Psoas muscle (tissue), 8 donors: ENCODE measurements at regions of chr14 and their contacts with region 1.

Region 1: GRCh38 chr14:100900837-100901390 is 2.6 kb downstream of the RTL1 start:
- DNase-seq: peak in 1 of 2 donors; percentile 52
- ATAC-seq: peak; percentile 36 to 76 (median 70)
- H3K4me3 ChIP-seq: no peak overlapping the region
- H3K27ac ChIP-seq: no peak overlapping the region
- H3K4me1 ChIP-seq: peaks cover 5% of the 10 kb centered on the region
- H3K27me3 ChIP-seq: peaks cover 0 to 59% (median 13%) of the 10 kb centered on the region in 3 donors
- CTCF ChIP-seq: peak; percentile 51

Region 2: GRCh38 chr14:99619835-99620834 is 1280.8 kb before region 1 on chr14:
- intact Hi-C with region 1: no loop called
- DNase-seq: no peak
- ATAC-seq: peak in 3 of 4 donors; percentile 34 to 49 (median 46)
- H3K4me3 ChIP-seq: no peak overlapping the region
- H3K27ac ChIP-seq: peak overlapping the region; percentile 23
- H3K4me1 ChIP-seq: no peaks in the 10 kb centered on the region
- H3K27me3 ChIP-seq: peaks cover 0 to 10% (median 3%) of the 10 kb centered on the region in 3 donors
- CTCF ChIP-seq: no peak

Region 3: GRCh38 chr14:100440187-100440631 is 460.7 kb before region 1 on chr14:
- intact Hi-C with region 1: loop called in 1 of 2 experiments (anchors 10 kb)
- DNase-seq: peak; percentile 76 to 86
- ATAC-seq: peak; percentile 93 to 98 (median 96)
- H3K4me3 ChIP-seq: no peak overlapping the region
- H3K27ac ChIP-seq: peak overlapping the region; percentile 21
- H3K4me1 ChIP-seq: peaks cover 16% of the 10 kb centered on the region
- H3K27me3 ChIP-seq: no peaks in the 10 kb centered on the region
- CTCF ChIP-seq: peak; percentile 79

Region 4: DNA sequence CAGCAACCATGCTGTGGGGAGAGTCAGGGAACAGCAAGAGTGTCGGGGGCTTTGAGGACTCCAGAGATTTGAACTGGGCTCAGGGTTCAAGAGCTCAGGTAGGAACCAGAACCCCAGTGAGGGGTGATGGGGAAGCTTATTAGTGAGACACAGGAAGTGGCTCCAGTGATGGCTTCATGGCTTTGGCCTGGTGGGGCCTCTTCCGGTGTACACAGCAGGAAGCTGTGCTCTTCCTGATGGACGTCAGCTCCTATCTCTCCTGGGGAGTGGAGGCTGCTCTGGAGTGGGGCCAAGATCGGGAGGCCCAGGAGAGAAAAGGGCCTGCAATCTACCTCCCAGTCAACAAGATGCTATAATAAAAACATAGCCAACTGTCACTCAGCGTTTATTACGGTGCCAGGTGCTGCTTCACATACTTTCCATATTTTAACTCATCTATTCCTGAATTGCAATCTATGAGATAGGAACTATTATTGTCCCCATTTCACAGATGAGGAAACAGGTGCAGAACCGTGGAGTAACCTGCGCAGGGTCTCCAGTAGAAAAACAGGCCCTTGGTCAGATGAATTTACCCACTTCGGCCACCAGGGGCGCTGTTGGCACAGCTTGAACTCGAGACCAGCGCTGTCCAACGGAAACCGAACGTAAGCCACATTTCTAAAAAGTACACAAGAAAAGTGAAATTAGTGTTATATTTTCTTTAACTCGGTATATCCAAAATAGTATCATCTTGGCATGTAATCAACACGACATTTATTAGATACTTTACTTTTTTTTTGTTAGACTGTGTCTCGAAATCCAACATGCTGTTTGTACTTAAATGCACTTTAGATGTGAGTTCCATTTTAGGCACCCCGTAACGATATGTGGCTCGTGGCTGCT is 237.8 kb before region 1 on chr14:
- intact Hi-C with region 1: loop called in 1 of 2 experiments (anchors 2 kb)
- DNase-seq: peak; percentile 70 to 78
- ATAC-seq: peak in 2 of 4 donors; percentile 50 to 64
- H3K4me3 ChIP-seq: no peak overlapping the region
- H3K27ac ChIP-seq: no peak overlapping the region
- H3K4me1 ChIP-seq: no peaks in the 10 kb centered on the region
- H3K27me3 ChIP-seq: peaks cover 0 to 46% (median 14%) of the 10 kb centered on the region in 3 donors
- CTCF ChIP-seq: peak; percentile 88

Region 5: GRCh38 chr14:100709289-100710284 is 191.3 kb before region 1 on chr14:
- intact Hi-C with region 1: loop called in 1 of 2 experiments (anchors 2 kb)
- DNase-seq: no peak
- ATAC-seq: peak in 3 of 4 donors; percentile 57 to 63 (median 60)
- H3K4me3 ChIP-seq: peak overlapping the region; percentile 38
- H3K27ac ChIP-seq: no peak overlapping the region
- H3K4me1 ChIP-seq: no peaks in the 10 kb centered on the region
- H3K27me3 ChIP-seq: peaks cover 0 to 49% (median 11%) of the 10 kb centered on the region in 3 donors
- CTCF ChIP-seq: peak; percentile 54